ENCODE measurements at regions of chr9 and their contacts with region 1.

Region 1: GRCh38 chr9:18857769-18858168 is 175.2 kb downstream of the SAXO1 start:
- DNase-seq: no peak
- ATAC-seq: no peak
- H3K4me3 Mint-ChIP-seq: no peak overlapping the region
- H3K27ac Mint-ChIP-seq: no peak overlapping the region
- H3K4me1 Mint-ChIP-seq: no peaks in the 10 kb centered on the region
- H3K27me3 Mint-ChIP-seq: peaks cover 2% of the 10 kb centered on the region

Region 2: GRCh38 chr9:18347386-18348082 is 510.2 kb before region 1 on chr9:
- CTCF ChIA-PET with region 1: no interaction called
- POLR2A ChIA-PET with region 1: no interaction called
- intact Hi-C with region 1: loop called in 1 of 2 experiments (anchors 10 kb)
- DNase-seq: no peak
- ATAC-seq: no peak
- H3K4me3 Mint-ChIP-seq: no peak overlapping the region
- H3K27ac Mint-ChIP-seq: no peak overlapping the region
- H3K4me1 Mint-ChIP-seq: no peaks in the 10 kb centered on the region
- H3K27me3 Mint-ChIP-seq: peaks cover 1% of the 10 kb centered on the region

Region 3: GRCh38 chr9:19440823-19441580 is 583.2 kb after region 1 on chr9:
- CTCF ChIA-PET with region 1: no interaction called
- POLR2A ChIA-PET with region 1: no interaction called
- intact Hi-C with region 1: no loop called
- DNase-seq: no peak
- ATAC-seq: peak; percentile 16
- H3K4me3 Mint-ChIP-seq: no peak overlapping the region
- H3K27ac Mint-ChIP-seq: peak overlapping the region; percentile 78
- H3K4me1 Mint-ChIP-seq: peaks cover 14% of the 10 kb centered on the region
- H3K27me3 Mint-ChIP-seq: no peaks in the 10 kb centered on the region